H1 (cell line): ENCODE measurements at regions of chr1 and their contacts with region 1.

Region 1: DNA sequence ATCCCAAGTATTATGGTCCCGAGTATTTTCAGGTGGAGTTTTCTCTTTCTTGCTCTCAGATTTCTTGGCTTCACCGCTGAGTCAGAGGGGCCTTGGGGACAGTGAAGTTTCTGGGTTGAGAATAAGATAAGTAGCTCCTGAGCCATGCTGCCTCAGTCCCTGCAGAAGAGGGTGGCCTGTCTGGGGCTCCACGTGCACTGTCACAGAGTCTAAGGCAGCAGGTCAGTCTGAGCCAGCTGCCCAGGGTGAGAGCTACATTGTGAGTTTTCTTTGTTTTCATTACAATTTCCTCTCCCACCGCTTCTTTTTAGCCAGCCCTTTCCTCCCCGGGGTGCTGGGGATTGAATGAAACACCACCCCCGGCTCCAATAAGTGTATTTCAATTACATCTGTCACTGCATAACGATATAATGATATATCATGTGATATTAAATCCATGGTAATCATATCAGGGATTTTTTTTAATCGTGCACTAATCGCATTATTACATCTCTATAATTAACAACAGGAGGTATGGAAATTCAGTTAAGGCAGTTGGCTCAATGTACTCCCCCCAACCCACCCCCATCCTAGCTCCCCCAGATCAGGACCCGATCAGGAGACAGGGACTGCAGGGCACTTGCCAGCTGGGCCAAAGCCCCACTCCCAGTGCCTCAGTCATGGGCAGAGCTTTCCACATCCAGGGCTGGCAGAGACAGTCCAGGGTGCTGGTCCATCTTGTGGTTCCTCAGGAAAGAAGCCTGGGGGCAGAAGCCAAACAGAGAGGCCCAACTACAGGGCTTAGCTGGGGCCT is 43.7 kb downstream of the DMAP1 start:
- DNase-seq: no peak
- H3K4me3 ChIP-seq: no peak overlapping the region
- H3K27ac ChIP-seq: no peak overlapping the region
- H3K4me1 ChIP-seq: peaks cover 0 to 11% (median 4%) of the 10 kb centered on the region in 4 experiments; a peak in 4 of 7 replicates
- H3K27me3 ChIP-seq: no peaks in the 10 kb centered on the region
- CTCF ChIP-seq: no peak
- EP300 ChIP-seq: no peak
- POLR2A ChIP-seq: no peak
- RAD21 ChIP-seq: no peak

Region 2: GRCh38 chr1:44237721-44238457 is 19.1 kb before region 1 on chr1:
- CTCF ChIA-PET with region 1: interaction called, 37 read pairs
- POLR2A ChIA-PET with region 1: interaction called, 6 read pairs
- DNase-seq: peak; percentile 69 to 91
- H3K4me3 ChIP-seq: peak overlapping the region in 1 of 4 experiments; percentile 31; a peak in 2 of 8 replicates
- H3K27ac ChIP-seq: no peak overlapping the region
- H3K4me1 ChIP-seq: peaks cover 0 to 26% (median 15%) of the 10 kb centered on the region in 4 experiments; a peak in 6 of 7 replicates
- H3K27me3 ChIP-seq: no peaks in the 10 kb centered on the region
- CTCF ChIP-seq: peak; percentile 70 to 86 (median 81)
- EP300 ChIP-seq: no peak
- POLR2A ChIP-seq: no peak
- RAD21 ChIP-seq: peak; percentile 58 to 60

Region 3: DNA sequence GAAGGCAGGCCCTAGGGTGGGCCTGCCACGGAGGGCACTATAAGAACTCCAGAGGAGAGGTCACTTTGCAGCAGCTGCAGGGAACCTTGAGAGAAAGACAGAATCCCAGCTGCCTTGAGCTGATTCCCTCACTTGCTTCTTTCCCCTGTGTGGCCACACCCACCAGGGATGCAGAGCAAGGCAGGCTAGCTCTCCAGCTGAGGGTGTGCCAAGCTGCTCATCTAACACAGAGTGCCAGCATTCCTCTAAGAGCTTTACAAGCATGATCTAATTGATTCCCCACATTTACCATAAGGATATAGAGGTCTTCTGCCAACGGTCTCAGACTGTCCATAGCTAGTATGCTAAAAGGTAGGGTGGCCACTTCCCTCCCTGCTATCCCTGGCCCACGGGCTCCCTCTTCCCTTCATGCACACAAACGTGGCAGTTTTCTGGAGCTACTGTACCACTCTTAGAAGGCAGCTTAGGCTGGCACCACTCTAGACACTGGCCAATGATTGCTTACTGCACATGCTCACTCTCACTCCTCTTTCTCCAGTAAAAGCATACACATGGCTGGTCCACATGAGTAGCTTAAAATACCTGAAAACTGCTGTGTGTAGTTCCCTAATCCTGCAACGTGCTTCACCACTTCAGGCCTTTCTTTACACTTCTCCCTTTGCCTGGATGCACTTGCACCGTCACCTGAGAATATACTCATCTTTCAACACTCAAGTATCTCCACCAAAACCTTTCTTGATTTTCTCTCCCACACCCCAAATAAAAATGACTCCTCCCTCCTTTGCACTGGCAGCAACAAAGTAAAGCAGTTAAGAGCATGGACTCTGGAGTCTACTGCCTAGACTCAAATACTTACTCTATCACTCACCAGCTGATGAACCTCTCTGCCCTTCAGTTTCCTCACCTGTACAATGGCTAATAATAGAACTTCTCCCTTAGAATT is 14.0 kb after region 1 on chr1:
- CTCF ChIA-PET with region 1: interaction called, 12 read pairs
- POLR2A ChIA-PET with region 1: interaction called, 5 read pairs
- DNase-seq: no peak
- H3K4me3 ChIP-seq: no peak overlapping the region
- H3K27ac ChIP-seq: no peak overlapping the region
- H3K4me1 ChIP-seq: no peaks in the 10 kb centered on the region; a peak in 2 of 7 replicates
- H3K27me3 ChIP-seq: no peaks in the 10 kb centered on the region
- CTCF ChIP-seq: no peak
- EP300 ChIP-seq: no peak
- POLR2A ChIP-seq: no peak
- RAD21 ChIP-seq: no peak

Region 4: GRCh38 chr1:44323947-44324346 is 67.0 kb after region 1 on chr1:
- CTCF ChIA-PET with region 1: no interaction called
- POLR2A ChIA-PET with region 1: no interaction called
- DNase-seq: no peak
- H3K4me3 ChIP-seq: no peak overlapping the region
- H3K27ac ChIP-seq: no peak overlapping the region
- H3K4me1 ChIP-seq: peaks cover 7 to 22% (median 18%) of the 10 kb centered on the region in 4 experiments; a peak in 5 of 7 replicates
- H3K27me3 ChIP-seq: no peaks in the 10 kb centered on the region
- CTCF ChIP-seq: no peak
- EP300 ChIP-seq: no peak
- POLR2A ChIP-seq: no peak
- RAD21 ChIP-seq: no peak